ENCODE measurements at regions of chr12 and their contacts with region 1.

Region 1: DNA sequence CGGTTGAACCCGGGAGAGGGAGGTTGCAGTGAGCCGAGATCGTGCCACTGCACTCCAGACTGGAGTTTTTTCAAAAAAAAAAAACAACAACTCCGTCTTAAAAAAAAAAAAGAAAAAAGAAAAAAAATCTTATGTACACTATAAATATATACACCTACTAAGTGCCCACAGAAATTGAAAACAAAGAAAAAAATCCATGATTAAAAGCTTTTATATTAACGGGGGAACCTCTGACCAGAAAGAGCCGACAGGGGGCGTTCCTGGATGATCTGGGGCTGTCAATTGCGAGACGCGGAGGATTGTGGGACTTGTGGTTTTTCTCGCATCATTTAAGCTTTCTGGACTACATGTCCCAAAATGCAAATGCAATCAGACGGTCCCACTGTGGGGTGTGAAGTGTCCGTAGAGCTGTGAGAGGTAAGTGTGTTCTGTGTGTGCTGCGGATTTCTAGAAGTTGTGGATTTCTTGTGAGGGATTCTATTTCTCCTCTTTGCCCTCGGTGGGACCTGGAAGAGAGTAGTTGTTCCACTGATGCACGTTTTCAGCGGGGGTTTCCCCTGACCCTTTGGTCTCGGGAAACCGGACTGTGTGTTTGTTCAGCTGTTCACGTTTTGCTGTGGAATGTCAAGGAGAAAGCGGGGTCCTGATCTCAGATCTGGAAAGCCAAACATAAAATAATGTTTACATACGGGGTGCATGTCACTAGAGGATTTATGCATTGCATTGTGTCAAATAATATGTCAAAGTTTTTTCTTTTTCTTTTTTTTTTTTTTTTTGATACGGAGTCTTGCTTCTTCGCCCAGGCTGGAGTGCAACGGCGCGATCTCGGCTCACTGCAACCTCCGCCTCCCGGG is at the start of gene SIRT4:
- DNase-seq: peak; percentile 95
- ATAC-seq: peak; percentile 100
- H3K4me3 Mint-ChIP-seq: peak within 1 kb of the TSS; percentile 83
- H3K27ac Mint-ChIP-seq: peak within 1 kb of the TSS; percentile 77
- H3K4me1 Mint-ChIP-seq: peaks cover 8% of the 10 kb centered on the region
- H3K27me3 Mint-ChIP-seq: no peaks in the 10 kb centered on the region
- total RNA-seq, gene SIRT4: 2.4 to 3.0 TPM

Region 2: GRCh38 chr12:120317224-120318105 is 15.3 kb after region 1 on chr12:
- CTCF ChIA-PET with region 1: interaction called, 47 read pairs
- DNase-seq: peak; percentile 100
- ATAC-seq: peak; percentile 100
- H3K4me3 Mint-ChIP-seq: peak overlapping the region; percentile 78
- H3K27ac Mint-ChIP-seq: peak overlapping the region; percentile 88
- H3K4me1 Mint-ChIP-seq: peaks cover 13% of the 10 kb centered on the region
- H3K27me3 Mint-ChIP-seq: no peaks in the 10 kb centered on the region

Measured in activated CD8-positive, alpha-beta memory T cell treated with anti-CD3 and anti-CD28 coated beads, Interleukin-2, amount 10 ng/mL, durations not matched to agents 7 days and 5 days (primary cell).